ENCODE measurements at regions of chr10 and their contacts with region 1.

Region 1: GRCh38 chr10:101782811-101783735 is at the start of gene NPM3:
- DNase-seq: peak; percentile 63
- H3K4me3 ChIP-seq: peak within 1 kb of the TSS; percentile 81 to 91 (median 87)
- H3K27ac ChIP-seq: peak within 1 kb of the TSS; percentile 53
- H3K4me1 ChIP-seq: peaks cover 41% of the 10 kb centered on the region
- H3K27me3 ChIP-seq: no peaks in the 10 kb centered on the region
- CTCF ChIP-seq: no peak
- total RNA-seq, gene NPM3: 99.4 to 104 TPM

Region 2: GRCh38 chr10:101161494-101162299 is 621.4 kb before region 1 on chr10:
- CTCF ChIA-PET with region 1: no interaction called
- dilution Hi-C with region 1: no loop called
- in situ Hi-C with region 1: no loop called
- intact Hi-C with region 1: loop called (anchors 1 kb)
- DNase-seq: peak; percentile 71
- H3K4me3 ChIP-seq: peak overlapping the region in 2 of 3 experiments; percentile 16 to 29
- H3K27ac ChIP-seq: no peak overlapping the region
- H3K4me1 ChIP-seq: peaks cover 9% of the 10 kb centered on the region
- H3K27me3 ChIP-seq: no peaks in the 10 kb centered on the region
- CTCF ChIP-seq: peak; percentile 96 to 98

Region 3: GRCh38 chr10:101587725-101588653 is 195.1 kb before region 1 on chr10 and contains the starts of genes DPCD and POLL:
- CTCF ChIA-PET with region 1: no interaction called
- dilution Hi-C with region 1: no loop called
- in situ Hi-C with region 1: no loop called
- intact Hi-C with region 1: loop called (anchors 1 kb)
- DNase-seq: peak; percentile 88
- H3K4me3 ChIP-seq: peak within 1 kb of the TSS; percentile 72 to 80 (median 77)
- H3K27ac ChIP-seq: peak within 1 kb of the TSS; percentile 43
- H3K4me1 ChIP-seq: no peaks in the 10 kb centered on the region
- H3K27me3 ChIP-seq: no peaks in the 10 kb centered on the region
- CTCF ChIP-seq: no peak
- total RNA-seq, gene DPCD: 25.8 to 32.2 TPM
- total RNA-seq, gene POLL: 14.7 to 30.3 TPM

Region 4: GRCh38 chr10:101609481-101609880 is 173.6 kb before region 1 on chr10:
- CTCF ChIA-PET with region 1: no interaction called
- dilution Hi-C with region 1: no loop called
- in situ Hi-C with region 1: loop called (anchors 5 to 10 kb)
- intact Hi-C with region 1: no loop called
- DNase-seq: no peak
- H3K4me3 ChIP-seq: no peak overlapping the region
- H3K27ac ChIP-seq: no peak overlapping the region
- H3K4me1 ChIP-seq: no peaks in the 10 kb centered on the region
- H3K27me3 ChIP-seq: no peaks in the 10 kb centered on the region
- CTCF ChIP-seq: no peak

Region 5: DNA sequence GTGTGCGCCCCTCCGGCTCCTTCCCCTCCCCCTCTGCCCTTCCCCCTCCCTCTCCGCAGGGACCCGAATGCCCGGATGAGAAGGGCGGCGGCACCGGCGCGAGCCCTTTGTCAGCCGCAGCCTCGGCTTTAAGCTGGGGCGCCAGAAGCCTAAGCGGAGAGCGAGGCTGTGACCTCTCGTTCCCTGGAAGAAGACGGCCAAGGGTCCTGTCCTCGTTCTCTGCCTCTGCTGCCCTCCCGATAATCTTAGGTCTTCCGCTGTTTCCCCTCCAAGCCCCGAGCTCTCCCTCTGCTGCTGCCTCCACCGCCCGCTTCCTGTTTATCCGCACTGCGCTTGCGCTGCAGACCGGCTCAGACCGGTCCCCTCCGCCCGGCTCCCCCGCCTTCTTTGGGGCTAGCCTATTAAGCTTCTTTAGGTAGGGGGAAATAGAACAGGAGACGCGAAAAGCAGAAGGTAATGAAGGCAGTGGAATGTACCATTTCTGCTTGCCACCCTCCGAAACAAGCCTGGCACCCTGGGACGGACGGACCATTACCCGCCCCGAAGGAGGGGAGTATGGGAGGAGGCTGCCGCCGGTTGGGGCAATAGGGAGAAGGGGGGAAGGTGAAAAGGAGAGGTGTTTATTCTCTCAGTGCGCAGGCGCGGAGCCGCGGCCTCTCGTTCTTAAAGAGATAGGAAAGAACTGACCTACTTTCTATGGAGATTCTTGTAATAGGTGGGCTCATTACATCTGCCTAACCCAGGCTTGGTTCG is 35.2 kb after region 1 on chr10 and contains the start of gene OGA:
- CTCF ChIA-PET with region 1: interaction called, 10 read pairs
- dilution Hi-C with region 1: no loop called
- in situ Hi-C with region 1: no loop called
- intact Hi-C with region 1: loop called (anchors 2 kb)
- DNase-seq: peak; percentile 100
- H3K4me3 ChIP-seq: peak within 1 kb of the TSS; percentile 77 to 88 (median 77)
- H3K27ac ChIP-seq: peak within 1 kb of the TSS; percentile 78
- H3K4me1 ChIP-seq: peaks cover 18% of the 10 kb centered on the region
- H3K27me3 ChIP-seq: no peaks in the 10 kb centered on the region
- CTCF ChIP-seq: no peak
- total RNA-seq, gene OGA: 82.4 to 97.5 TPM

Region 6: GRCh38 chr10:101848894-101849351 is 65.8 kb after region 1 on chr10:
- CTCF ChIA-PET with region 1: no interaction called
- dilution Hi-C with region 1: no loop called
- in situ Hi-C with region 1: no loop called
- intact Hi-C with region 1: no loop called
- DNase-seq: no peak
- H3K4me3 ChIP-seq: no peak overlapping the region
- H3K27ac ChIP-seq: no peak overlapping the region
- H3K4me1 ChIP-seq: no peaks in the 10 kb centered on the region
- H3K27me3 ChIP-seq: no peaks in the 10 kb centered on the region
- CTCF ChIP-seq: no peak

Region 7: DNA sequence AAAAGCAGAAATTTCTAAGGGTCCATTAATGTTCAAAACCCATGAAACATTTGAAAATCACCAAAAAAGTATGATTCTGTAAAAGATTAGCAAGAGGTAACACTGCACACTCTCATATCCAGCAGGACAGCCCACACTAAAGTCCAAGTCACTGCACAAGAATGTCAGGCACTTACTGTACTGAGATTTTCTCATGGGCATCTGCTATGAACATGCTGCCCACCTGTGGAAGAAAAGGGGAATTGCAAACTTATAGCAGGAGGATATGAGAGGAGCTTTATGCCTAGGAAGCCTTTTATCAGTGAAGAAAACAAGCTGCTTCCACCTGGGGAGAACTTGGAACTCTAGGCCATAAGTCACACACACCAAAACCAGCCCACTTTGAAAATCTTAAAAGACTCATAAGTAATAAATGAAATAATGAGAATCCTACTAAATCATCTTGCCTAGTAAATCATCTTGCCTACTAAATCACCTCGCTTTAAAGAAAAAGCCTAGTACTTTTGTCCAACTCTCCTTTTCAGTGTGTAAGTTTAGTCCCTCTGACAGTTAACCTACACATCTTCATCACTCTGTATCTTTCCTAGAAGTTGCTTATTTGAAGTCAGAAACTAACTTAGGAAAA is 226.8 kb after region 1 on chr10:
- CTCF ChIA-PET with region 1: interaction called, 4 read pairs
- dilution Hi-C with region 1: no loop called
- in situ Hi-C with region 1: no loop called
- intact Hi-C with region 1: loop called (anchors 1 kb)
- DNase-seq: peak; percentile 79
- H3K4me3 ChIP-seq: no peak overlapping the region
- H3K27ac ChIP-seq: no peak overlapping the region
- H3K4me1 ChIP-seq: peaks cover 6% of the 10 kb centered on the region
- H3K27me3 ChIP-seq: no peaks in the 10 kb centered on the region
- CTCF ChIP-seq: peak; percentile 99 to 100

Region 8: GRCh38 chr10:102083541-102083940 is 300.5 kb after region 1 on chr10:
- CTCF ChIA-PET with region 1: interaction called, 23 read pairs
- dilution Hi-C with region 1: no loop called
- in situ Hi-C with region 1: no loop called
- intact Hi-C with region 1: no loop called
- DNase-seq: no peak
- H3K4me3 ChIP-seq: no peak overlapping the region
- H3K27ac ChIP-seq: no peak overlapping the region
- H3K4me1 ChIP-seq: no peaks in the 10 kb centered on the region
- H3K27me3 ChIP-seq: no peaks in the 10 kb centered on the region
- CTCF ChIP-seq: no peak

Measured in mammary epithelial cell (primary cell).